ENCODE measurements at regions of chr10 and their contacts with region 1.

Region 1: GRCh38 chr10:132616170-132616995 is 78.8 kb downstream of the INPP5A start:
- DNase-seq: peak; percentile 80
- ATAC-seq: peak; percentile 80
- H3K4me3 Mint-ChIP-seq: peak overlapping the region; percentile 44
- H3K27ac Mint-ChIP-seq: peak overlapping the region; percentile 58
- H3K4me1 Mint-ChIP-seq: peaks cover 28% of the 10 kb centered on the region
- H3K27me3 Mint-ChIP-seq: peaks cover 3% of the 10 kb centered on the region

Region 2: DNA sequence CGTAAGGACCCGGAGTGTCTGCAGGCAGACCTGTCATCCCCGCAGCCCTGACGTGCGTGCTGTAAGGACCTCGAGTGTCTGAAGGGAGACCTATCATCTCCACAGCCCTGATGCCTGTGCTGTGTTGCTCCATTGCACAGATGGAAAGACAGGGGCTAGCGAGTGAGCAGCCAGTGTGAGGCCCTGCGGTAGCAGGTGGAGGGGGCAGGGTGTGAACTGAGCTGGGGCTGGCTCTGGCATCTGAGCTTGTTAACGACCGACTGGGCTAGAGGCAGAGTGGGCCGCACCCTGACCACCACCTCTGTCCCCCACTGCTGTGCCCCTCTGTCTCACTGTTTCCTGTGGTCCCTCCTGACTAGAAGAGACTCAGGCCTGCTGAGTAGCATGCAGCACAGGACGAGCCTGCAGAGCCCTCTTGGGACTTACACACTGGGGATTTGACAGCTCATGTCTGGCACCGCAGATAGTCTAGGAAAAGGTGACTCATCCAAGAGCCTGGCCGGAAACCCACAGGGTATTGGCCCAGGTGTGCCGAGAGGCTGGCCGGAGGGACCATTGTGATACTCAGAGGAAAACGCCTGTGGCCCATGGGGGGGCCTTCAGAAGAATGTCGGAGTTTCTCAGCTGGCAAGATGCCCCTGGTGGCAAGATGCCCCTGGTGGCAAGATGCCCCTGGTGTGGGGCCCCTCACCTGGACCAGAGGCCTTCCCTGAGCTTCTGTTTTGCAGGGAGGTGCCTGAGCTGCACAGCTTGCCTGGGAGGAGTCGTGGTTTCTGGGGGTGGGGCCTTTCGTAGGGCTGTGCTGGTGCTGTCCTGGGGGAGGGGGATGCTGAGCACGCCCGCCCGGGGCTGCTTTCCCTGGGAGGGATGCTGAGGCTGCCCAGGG is 44.5 kb before region 1 on chr10:
- CTCF ChIA-PET with region 1: no interaction called
- POLR2A ChIA-PET with region 1: no interaction called
- intact Hi-C with region 1: loop called (anchors 1 to 5 kb)
- DNase-seq: peak; percentile 83
- ATAC-seq: peak; percentile 85
- H3K4me3 Mint-ChIP-seq: peak overlapping the region; percentile 15
- H3K27ac Mint-ChIP-seq: no peak overlapping the region
- H3K4me1 Mint-ChIP-seq: peaks cover 33% of the 10 kb centered on the region
- H3K27me3 Mint-ChIP-seq: no peaks in the 10 kb centered on the region

Region 3: GRCh38 chr10:132588301-132589013 is 27.9 kb before region 1 on chr10:
- CTCF ChIA-PET with region 1: no interaction called
- POLR2A ChIA-PET with region 1: no interaction called
- intact Hi-C with region 1: loop called in 1 of 2 experiments (anchors 2 kb)
- DNase-seq: peak; percentile 72
- ATAC-seq: peak; percentile 68
- H3K4me3 Mint-ChIP-seq: peak overlapping the region; percentile 44
- H3K27ac Mint-ChIP-seq: peak overlapping the region; percentile 42
- H3K4me1 Mint-ChIP-seq: peaks cover 59% of the 10 kb centered on the region
- H3K27me3 Mint-ChIP-seq: no peaks in the 10 kb centered on the region

Measured in activated CD4-positive, alpha-beta T cell treated with anti-CD3 and anti-CD28 coated beads for 36 hours (primary cell).